Activated T-helper 1 cell treated with anti-CD3 and anti-CD28 coated beads, Interleukin-12 subunit alpha, Interleukin-12 subunit beta, Interleukin-2, Interleukin-4 antibody, amounts not matched to agents 30 ng/mL and 10 ng/mL and 1 ng/mL, durations not matched to agents 14 hours and 24 hours and 36 hours (primary cell): ENCODE measurements at regions of chr1 and their contacts with region 1.

Region 1: DNA sequence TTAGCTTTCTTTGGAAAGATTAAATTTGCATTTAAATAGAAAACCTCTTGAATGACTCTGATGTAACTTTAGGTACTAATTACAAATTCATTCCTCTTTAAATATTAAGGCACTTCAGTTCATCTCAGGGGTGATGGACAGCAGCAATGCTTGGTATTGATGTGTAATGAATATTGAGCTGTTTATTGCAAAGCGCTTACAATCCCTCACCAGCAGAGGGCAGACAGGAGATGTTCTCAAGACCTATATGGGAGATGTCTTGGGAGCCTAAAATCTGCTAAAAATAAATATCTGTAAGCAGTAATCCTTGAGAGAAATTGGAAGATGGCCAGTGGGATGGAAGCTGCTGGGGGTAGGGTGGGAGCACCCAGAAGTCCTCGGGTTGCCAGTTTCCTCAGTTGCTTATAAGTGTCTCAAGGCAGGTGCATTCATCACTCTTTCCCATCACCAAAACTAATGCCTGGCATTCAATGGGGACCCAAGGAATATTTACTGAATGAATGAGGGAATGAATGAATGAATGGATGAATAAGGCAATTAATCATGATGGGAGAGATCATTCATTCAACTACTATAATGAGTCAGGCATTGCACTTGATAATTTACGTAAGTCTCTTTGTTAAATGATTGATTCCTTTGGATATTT is 2.3 kb downstream of the KLHDC8A start:
- DNase-seq: peak; percentile 27
- H3K4me3 Mint-ChIP-seq: no peak overlapping the region
- H3K27ac Mint-ChIP-seq: no peak overlapping the region
- H3K4me1 Mint-ChIP-seq: no peaks in the 10 kb centered on the region
- H3K27me3 Mint-ChIP-seq: peaks cover 19% of the 10 kb centered on the region

Region 2: GRCh38 chr1:205273551-205273982 is 80.8 kb before region 1 on chr1:
- intact Hi-C with region 1: loop called (anchors 1 kb)
- DNase-seq: peak; percentile 74
- H3K4me3 Mint-ChIP-seq: no peak overlapping the region
- H3K27ac Mint-ChIP-seq: no peak overlapping the region
- H3K4me1 Mint-ChIP-seq: peaks cover 32% of the 10 kb centered on the region
- H3K27me3 Mint-ChIP-seq: no peaks in the 10 kb centered on the region

Region 3: GRCh38 chr1:205396967-205397616 is 42.7 kb after region 1 on chr1:
- intact Hi-C with region 1: no loop called
- DNase-seq: no peak
- H3K4me3 Mint-ChIP-seq: no peak overlapping the region
- H3K27ac Mint-ChIP-seq: no peak overlapping the region
- H3K4me1 Mint-ChIP-seq: no peaks in the 10 kb centered on the region
- H3K27me3 Mint-ChIP-seq: peaks cover 25% of the 10 kb centered on the region

Region 4: DNA sequence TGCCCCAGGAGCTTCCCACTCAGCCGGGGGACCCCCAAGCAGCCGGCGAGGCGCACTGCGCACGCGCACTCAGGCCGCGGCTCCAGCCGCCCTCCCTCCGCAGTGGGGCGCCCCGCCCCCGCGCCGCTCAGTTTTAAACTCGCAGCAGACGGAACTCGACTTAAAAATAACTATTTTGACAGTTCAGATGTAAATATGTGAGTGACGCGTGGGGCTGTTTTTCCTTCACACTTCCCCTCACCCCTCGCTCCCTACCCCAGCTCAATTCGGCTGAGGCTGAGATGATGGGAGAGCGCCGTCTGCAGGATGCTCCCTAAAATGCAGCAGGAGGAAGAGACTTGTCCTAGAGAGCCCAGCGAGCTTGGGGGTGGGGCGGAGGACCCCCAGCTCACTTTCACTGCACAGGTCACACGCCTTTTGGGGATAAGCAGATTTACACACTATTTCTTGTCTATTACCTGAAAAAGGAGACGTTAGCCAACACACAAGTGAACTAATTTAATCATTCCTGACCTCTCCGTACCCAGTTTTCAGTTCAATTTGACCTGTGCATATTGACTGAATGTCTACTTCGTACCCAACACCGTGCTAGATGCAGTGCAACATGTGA is 76.4 kb after region 1 on chr1:
- intact Hi-C with region 1: loop called (anchors 1 kb)
- DNase-seq: peak; percentile 27
- H3K4me3 Mint-ChIP-seq: peak overlapping the region; percentile 84
- H3K27ac Mint-ChIP-seq: no peak overlapping the region
- H3K4me1 Mint-ChIP-seq: peaks cover 16% of the 10 kb centered on the region
- H3K27me3 Mint-ChIP-seq: peaks cover 38% of the 10 kb centered on the region

Region 5: DNA sequence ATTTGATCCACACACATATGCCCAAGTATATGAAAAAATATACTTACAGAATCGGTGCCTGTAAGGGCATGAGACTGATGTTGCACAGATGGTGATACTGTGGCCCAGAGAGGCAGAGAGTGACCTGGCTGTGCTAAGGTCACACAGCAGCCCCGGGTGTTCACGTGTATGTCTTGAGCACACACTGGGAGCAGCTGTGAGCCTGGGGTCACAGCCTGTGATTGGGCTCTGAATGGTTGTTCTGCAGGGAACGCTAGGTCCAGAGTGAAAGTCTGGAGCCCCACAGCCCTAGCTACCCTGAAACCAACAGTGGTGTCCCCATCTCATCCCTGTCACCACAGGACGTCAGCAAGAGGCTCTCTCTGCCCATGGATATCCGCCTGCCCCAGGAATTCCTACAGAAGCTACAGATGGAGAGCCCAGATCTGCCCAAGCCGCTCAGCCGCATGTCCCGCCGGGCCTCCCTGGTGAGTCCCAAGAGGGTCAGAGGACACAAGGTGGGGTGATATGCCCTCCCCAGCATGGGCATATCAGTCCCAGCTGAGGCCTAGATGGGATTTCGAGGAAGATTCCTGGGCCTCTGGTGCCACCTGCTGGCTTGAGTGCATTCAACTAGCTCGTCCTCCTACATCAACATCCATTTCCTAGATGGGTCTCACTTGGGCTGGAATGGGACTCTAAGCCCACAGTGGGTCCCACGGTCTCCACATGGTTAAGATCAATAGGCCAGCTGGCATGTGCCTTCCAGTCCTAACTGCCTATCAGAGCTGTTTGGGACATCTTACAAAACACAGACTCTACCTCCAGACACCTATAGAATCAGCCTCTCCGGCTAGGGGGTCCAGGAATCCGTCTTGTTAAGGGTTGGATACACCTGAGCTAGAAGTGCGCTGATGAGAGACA is 169.8 kb after region 1 on chr1:
- intact Hi-C with region 1: loop called (anchors 1 kb)
- DNase-seq: peak; percentile 45
- H3K4me3 Mint-ChIP-seq: no peak overlapping the region
- H3K27ac Mint-ChIP-seq: no peak overlapping the region
- H3K4me1 Mint-ChIP-seq: no peaks in the 10 kb centered on the region
- H3K27me3 Mint-ChIP-seq: peaks cover 3% of the 10 kb centered on the region